ENCODE measurements at regions of chr1 and their contacts with region 1.

Region 1: GRCh38 chr1:162854245-162854882 is 6.6 kb downstream of the CCDC190 start:
- DNase-seq: peak; percentile 62 to 75 (median 67)
- ATAC-seq: peak; percentile 93
- H3K4me3 ChIP-seq: no peak overlapping the region
- H3K27ac ChIP-seq: no peak overlapping the region
- H3K4me1 ChIP-seq: no peaks in the 10 kb centered on the region
- H3K27me3 ChIP-seq: 0 out of 5 replicates have a peak, but pooled peaks cover 3 to 4% of the 10 kb centered on the region in 2 experiments
- CTCF ChIP-seq: peak; percentile 72 to 91 (median 78)
- EP300 ChIP-seq: no peak
- POLR2A ChIP-seq: no peak
- RAD21 ChIP-seq: peak; percentile 73 to 86

Region 2: DNA sequence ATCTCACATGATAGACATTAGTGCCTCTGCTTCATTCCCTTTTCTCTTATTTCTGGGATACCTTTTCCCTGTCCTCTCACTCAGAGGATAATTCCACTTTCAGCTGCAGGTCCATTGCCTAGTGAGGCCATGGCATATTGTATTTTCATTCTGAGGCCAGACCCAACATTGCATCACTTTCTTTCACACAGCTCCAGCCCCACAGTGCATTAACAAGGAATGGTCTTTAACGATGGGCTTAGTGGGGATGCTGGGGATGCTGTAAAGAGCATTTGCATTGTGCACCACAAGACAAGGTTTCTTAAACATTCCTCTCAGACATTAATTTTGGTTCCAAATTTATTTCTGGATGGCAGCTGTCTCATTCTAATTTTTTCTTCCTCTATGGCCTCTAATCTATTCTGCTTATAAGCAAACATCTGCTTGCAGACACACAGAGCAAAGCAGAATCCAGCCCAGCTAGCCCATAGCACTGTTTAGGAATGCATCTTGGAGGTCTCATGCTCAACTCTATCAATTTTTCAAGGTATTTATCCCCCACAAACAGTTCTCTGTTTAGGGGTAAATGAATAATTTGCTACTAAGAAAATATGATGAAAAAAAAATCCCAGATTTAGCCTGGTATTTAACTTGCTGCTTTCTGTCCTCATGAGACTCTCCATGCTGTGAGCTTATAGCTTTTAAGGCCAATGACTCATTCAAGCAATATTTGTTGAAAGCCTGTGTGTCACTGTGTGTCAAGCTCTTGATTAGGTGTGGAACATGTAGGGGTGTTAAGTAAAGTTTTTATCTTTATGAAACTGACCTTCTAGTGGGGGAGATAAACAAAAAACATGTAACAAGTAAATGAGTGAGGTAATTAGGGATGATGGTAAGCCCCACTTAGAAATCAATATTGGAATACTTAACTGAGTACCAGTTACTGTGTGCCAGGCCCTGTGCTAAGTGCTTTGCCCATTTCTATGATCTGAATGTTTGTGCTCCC is 51.1 kb after region 1 on chr1:
- CTCF ChIA-PET with region 1: no interaction called
- POLR2A ChIA-PET with region 1: no interaction called
- in situ Hi-C with region 1: no loop called
- intact Hi-C with region 1: loop called (anchors 5 kb)
- DNase-seq: peak in 1 of 4 experiments; percentile 8
- ATAC-seq: 0 out of 3 replicates have a peak, but pooled peaks have one; percentile 28
- H3K4me3 ChIP-seq: no peak overlapping the region
- H3K27ac ChIP-seq: no peak overlapping the region
- H3K4me1 ChIP-seq: no peaks in the 10 kb centered on the region; a peak in 1 of 5 replicates
- H3K27me3 ChIP-seq: no peaks in the 10 kb centered on the region; a peak in 2 of 5 replicates
- CTCF ChIP-seq: no peak
- EP300 ChIP-seq: no peak
- POLR2A ChIP-seq: no peak
- RAD21 ChIP-seq: no peak

Region 3: GRCh38 chr1:163022129-163022528 is 167.8 kb after region 1 on chr1:
- CTCF ChIA-PET with region 1: no interaction called
- POLR2A ChIA-PET with region 1: no interaction called
- in situ Hi-C with region 1: no loop called
- intact Hi-C with region 1: no loop called
- DNase-seq: no peak
- ATAC-seq: no peak
- H3K4me3 ChIP-seq: no peak overlapping the region
- H3K27ac ChIP-seq: no peak overlapping the region
- H3K4me1 ChIP-seq: no peaks in the 10 kb centered on the region
- H3K27me3 ChIP-seq: no peaks in the 10 kb centered on the region
- CTCF ChIP-seq: no peak
- EP300 ChIP-seq: no peak
- POLR2A ChIP-seq: no peak
- RAD21 ChIP-seq: no peak

Region 4: GRCh38 chr1:163186862-163187261 is 332.5 kb after region 1 on chr1:
- CTCF ChIA-PET with region 1: no interaction called
- POLR2A ChIA-PET with region 1: no interaction called
- in situ Hi-C with region 1: loop called (anchors 10 kb)
- intact Hi-C with region 1: no loop called
- DNase-seq: no peak
- ATAC-seq: no peak
- H3K4me3 ChIP-seq: no peak overlapping the region
- H3K27ac ChIP-seq: no peak overlapping the region
- H3K4me1 ChIP-seq: no peaks in the 10 kb centered on the region
- H3K27me3 ChIP-seq: no peaks in the 10 kb centered on the region
- CTCF ChIP-seq: no peak
- EP300 ChIP-seq: no peak
- POLR2A ChIP-seq: no peak
- RAD21 ChIP-seq: no peak

Region 5: DNA sequence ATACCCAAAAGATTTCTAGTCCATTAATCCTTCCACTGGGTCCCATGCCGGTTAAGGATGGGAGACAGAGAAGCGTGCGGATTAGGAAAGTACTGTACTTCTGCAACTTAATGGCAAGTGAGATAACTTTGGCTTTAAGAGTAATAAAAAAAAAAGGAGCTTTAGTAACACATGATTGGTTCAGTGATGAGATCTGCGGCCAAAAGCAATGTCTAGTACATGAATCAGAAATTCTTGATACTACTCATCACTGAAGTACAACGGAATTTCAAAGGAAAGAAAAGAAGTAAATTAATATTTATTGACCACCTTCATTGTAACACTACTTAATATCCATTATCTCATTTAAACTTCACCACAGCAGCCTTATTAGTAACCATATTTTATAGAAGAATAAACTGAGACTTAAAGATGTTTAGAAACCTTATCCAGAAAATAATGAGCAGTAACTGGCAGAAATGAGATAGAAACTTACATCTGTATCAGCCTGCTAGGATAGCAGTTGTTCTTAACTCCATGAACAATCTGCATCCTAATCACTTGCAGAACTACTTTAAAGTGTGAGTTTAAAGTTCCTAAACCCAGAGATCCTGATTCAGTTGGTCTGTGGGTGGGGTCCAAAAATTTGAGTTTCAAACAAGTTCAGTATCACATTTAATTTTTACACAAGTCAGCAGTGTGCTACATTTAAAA is 453.3 kb after region 1 on chr1:
- CTCF ChIA-PET with region 1: no interaction called
- POLR2A ChIA-PET with region 1: no interaction called
- in situ Hi-C with region 1: loop called (anchors 5 kb)
- intact Hi-C with region 1: no loop called
- DNase-seq: no peak
- ATAC-seq: no peak
- H3K4me3 ChIP-seq: no peak overlapping the region
- H3K27ac ChIP-seq: no peak overlapping the region
- H3K4me1 ChIP-seq: no peaks in the 10 kb centered on the region
- H3K27me3 ChIP-seq: no peaks in the 10 kb centered on the region
- CTCF ChIP-seq: no peak
- EP300 ChIP-seq: no peak
- POLR2A ChIP-seq: no peak
- RAD21 ChIP-seq: no peak

Region 6: DNA sequence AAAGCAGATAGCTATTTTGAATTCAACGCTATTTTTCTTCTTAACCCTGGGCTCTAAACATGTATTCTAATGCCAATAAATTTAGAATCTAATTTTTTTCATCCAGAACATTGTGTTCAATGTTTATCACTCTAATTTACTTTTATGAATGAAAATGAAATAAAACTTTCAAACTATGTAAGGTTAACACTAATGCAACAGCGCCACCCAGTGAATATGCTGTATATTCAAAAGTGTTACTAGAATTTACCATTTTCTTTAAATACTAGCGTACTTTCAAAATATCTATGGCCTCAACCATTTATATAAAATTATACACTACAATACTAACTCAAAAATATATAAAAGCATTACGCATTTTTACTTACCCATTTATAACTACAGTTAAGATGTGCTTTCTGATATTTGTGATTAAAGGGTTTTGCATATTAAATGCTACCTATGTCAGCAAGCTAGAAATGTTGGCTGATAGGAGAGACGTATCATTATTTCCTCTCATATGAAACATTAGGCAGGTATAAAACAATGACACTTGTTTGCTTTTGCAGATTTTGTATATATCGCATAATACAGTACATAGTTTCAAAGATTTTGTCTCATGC is 461.5 kb after region 1 on chr1:
- CTCF ChIA-PET with region 1: interaction called, 19 read pairs
- POLR2A ChIA-PET with region 1: no interaction called
- in situ Hi-C with region 1: no loop called
- intact Hi-C with region 1: loop called (anchors 1 kb)
- DNase-seq: peak in 3 of 4 experiments; percentile 22 to 57 (median 39)
- ATAC-seq: peak; percentile 71
- H3K4me3 ChIP-seq: no peak overlapping the region
- H3K27ac ChIP-seq: no peak overlapping the region
- H3K4me1 ChIP-seq: no peaks in the 10 kb centered on the region; a peak in 1 of 5 replicates
- H3K27me3 ChIP-seq: no peaks in the 10 kb centered on the region
- CTCF ChIP-seq: peak in 2 of 3 experiments; percentile 54 to 89; a peak in 4 of 6 replicates
- EP300 ChIP-seq: no peak
- POLR2A ChIP-seq: no peak
- RAD21 ChIP-seq: peak; percentile 75 to 78

Region 7: GRCh38 chr1:163321311-163322305 is 467.2 kb after region 1 on chr1 and contains the start of gene NUF2:
- CTCF ChIA-PET with region 1: no interaction called
- POLR2A ChIA-PET with region 1: no interaction called
- in situ Hi-C with region 1: no loop called
- intact Hi-C with region 1: loop called (anchors 1 kb)
- DNase-seq: peak; percentile 95 to 99 (median 96)
- ATAC-seq: peak; percentile 94
- H3K4me3 ChIP-seq: peak within 1 kb of the TSS; percentile 60
- H3K27ac ChIP-seq: peak within 1 kb of the TSS; percentile 87
- H3K4me1 ChIP-seq: peaks cover 0 to 4% of the 10 kb centered on the region in 2 experiments; a peak in 1 of 5 replicates
- H3K27me3 ChIP-seq: no peaks in the 10 kb centered on the region
- CTCF ChIP-seq: no peak
- EP300 ChIP-seq: peak; percentile 77
- POLR2A ChIP-seq: peak; percentile 91
- RAD21 ChIP-seq: peak; percentile 16 to 18; a peak in 1 of 4 replicates
- polyA plus RNA-seq, gene NUF2: 42.6 to 43.9 TPM